Posterior cingulate gyrus (tissue), 11 donors: ENCODE measurements at regions of chr12 and their contacts with region 1.

Region 1: DNA sequence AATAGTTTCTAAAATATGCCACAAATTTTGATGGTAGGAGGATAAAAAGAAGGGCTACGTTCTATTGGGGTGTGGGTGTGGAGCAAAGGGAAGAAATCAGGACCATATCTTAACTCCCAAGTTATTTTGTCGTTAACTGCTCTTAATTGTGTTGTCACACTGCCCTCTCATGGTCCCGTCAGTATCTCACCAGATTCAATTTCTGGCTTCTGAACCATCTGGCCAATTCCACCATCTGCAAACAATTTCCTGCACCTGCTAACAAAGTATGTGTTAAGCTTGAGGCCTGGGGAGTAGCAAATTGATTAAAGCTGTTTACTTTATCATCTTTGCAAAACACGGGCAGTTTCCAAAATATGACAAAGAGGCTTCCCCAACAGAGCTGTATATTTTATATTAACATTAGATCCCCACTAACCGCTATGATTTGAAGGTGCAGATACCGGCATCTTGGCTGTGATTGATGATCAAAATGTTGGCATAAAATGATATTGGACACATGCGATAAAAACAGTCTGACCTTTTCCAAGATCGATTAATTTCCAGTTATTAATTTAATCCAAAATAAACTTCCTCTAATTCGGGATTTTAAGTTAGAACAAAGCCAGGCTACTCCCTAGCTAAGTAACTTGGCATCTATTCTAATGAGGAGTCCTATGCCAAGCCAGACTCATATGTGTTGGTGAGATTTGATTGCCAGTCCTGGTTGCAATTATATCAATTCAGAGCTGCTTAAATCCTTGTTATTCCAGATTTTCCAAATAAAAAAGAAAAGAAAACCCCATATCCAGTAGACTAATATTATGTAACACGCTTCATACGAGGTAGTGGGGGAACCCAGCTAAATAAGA is 6.9 kb upstream of the DNM1L start:
- DNase-seq: peak in 4 of 10 donors; percentile 27 to 44 (median 36)

Region 2: DNA sequence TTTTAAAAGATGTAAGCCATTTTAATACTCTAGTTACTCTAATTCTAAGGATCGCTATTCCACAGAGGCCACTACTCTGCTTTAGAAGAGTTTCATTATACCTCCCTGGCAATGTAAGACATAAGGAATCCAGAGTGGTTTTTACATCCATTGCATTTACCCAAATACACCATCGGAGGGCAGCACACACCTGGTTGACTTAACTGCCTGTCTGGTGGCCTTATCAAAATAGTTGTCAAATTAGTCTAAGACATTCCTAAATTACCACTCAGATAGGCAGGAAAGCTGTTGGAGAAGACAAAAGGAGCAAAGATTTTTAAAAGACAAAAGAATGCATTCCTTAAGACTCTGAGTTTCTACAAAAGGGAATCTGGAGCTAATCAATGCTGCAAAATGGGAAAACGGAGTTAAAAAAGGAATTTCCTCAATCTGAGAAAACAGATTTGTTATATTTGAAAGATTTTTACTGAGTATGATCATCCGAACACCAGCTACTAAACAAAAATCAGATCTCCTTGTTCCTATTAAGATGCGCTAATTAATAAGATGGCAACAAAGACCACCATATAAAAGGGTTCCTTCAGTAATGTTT is 306.6 kb before region 1 on chr12:
- intact Hi-C with region 1: loop called (anchors 1 kb)
- DNase-seq: peak in 6 of 10 donors; percentile 25 to 46 (median 34)